ENCODE measurements at regions of chr17 and their contacts with region 1.

Region 1: GRCh38 chr17:44199553-44200477 is at the start of gene ATXN7L3:
- DNase-seq: peak; percentile 98
- ATAC-seq: peak; percentile 71
- H3K4me3 Mint-ChIP-seq: peak within 1 kb of the TSS; percentile 95
- H3K27ac Mint-ChIP-seq: peak within 1 kb of the TSS; percentile 97
- H3K4me1 Mint-ChIP-seq: peaks cover 45% of the 10 kb centered on the region
- H3K27me3 Mint-ChIP-seq: no peaks in the 10 kb centered on the region
- total RNA-seq, gene ATXN7L3: 116 TPM

Region 2: GRCh38 chr17:44331249-44331760 is 131.5 kb after region 1 on chr17:
- POLR2A ChIA-PET with region 1: interaction called, 10 read pairs
- DNase-seq: no peak
- ATAC-seq: peak; percentile 27
- H3K4me3 Mint-ChIP-seq: no peak overlapping the region
- H3K27ac Mint-ChIP-seq: no peak overlapping the region
- H3K4me1 Mint-ChIP-seq: peaks cover 13% of the 10 kb centered on the region
- H3K27me3 Mint-ChIP-seq: peaks cover 2% of the 10 kb centered on the region